ENCODE measurements at regions of chr17 and their contacts with region 1.

Region 1: DNA sequence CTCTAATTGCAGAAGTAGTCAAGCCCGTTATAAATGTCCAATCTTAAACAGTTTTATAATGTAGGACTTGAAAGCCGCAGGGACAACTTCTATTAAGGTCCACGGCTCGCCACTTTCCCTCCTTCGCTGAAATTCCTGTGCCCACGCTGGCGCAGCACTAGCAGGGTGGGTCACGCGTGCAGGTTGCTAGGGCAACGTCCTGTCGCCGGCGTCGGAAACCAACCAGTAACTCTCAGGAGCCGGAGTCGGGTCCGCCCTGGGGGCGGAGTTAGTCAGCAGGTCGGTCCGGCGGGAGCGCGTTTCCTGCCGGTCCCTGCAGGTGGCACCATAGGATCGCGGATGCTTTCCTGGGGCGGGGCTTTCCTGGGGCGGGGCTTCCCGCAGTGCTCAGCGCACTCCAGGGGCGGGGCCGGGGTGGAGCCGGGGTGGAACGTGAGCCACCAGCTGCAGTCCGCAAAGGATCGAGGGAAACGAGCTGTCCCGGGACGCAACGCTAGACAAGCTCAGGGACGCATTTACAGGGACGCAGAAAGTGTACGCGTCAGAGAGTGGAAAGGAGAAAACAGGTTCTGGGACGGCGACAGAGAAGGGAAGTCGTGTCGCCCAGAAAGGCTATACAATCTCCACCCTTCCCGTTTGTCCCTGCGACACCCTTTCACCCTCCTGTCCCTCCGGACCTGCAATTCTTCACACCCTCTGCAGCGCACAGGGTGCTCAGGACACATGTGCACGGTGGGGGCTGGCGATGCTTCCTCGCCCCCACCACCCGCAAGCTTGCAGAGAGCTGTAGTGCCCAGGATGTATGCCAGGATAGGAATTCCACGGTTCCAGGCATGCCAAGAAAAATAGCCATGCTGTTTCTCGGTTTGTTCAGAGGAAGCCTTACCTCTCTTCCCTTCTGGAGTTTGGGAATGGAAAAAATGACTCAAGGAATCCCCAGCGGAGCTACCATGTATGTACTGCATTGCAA is 12.4 kb downstream of the COPZ2 start:
- DNase-seq: peak; percentile 99
- ATAC-seq: peak; percentile 89
- H3K4me3 Mint-ChIP-seq: peak overlapping the region; percentile 77
- H3K27ac Mint-ChIP-seq: no peak overlapping the region
- H3K4me1 Mint-ChIP-seq: peaks cover 26% of the 10 kb centered on the region
- H3K27me3 Mint-ChIP-seq: peaks cover 25% of the 10 kb centered on the region

Region 2: GRCh38 chr17:47603830-47604597 is 421.2 kb before region 1 on chr17:
- CTCF ChIA-PET with region 1: no interaction called
- POLR2A ChIA-PET with region 1: no interaction called
- intact Hi-C with region 1: no loop called
- DNase-seq: no peak
- ATAC-seq: no peak
- H3K4me3 Mint-ChIP-seq: no peak overlapping the region
- H3K27ac Mint-ChIP-seq: no peak overlapping the region
- H3K4me1 Mint-ChIP-seq: peaks cover 4% of the 10 kb centered on the region
- H3K27me3 Mint-ChIP-seq: no peaks in the 10 kb centered on the region

Region 3: GRCh38 chr17:47895856-47896671 is 129.2 kb before region 1 on chr17 and contains the start of gene SP2:
- CTCF ChIA-PET with region 1: interaction called, 4 read pairs
- POLR2A ChIA-PET with region 1: no interaction called
- intact Hi-C with region 1: loop called (anchors 1 to 5 kb)
- DNase-seq: peak; percentile 99
- ATAC-seq: peak; percentile 94
- H3K4me3 Mint-ChIP-seq: peak within 1 kb of the TSS; percentile 96
- H3K27ac Mint-ChIP-seq: peak within 1 kb of the TSS; percentile 96
- H3K4me1 Mint-ChIP-seq: peaks cover 46% of the 10 kb centered on the region
- H3K27me3 Mint-ChIP-seq: no peaks in the 10 kb centered on the region
- total RNA-seq, gene SP2: 15.7 to 19.8 TPM

Region 4: GRCh38 chr17:48037036-48037837 is 12.0 kb after region 1 on chr17 and contains the start of gene COPZ2:
- CTCF ChIA-PET with region 1: interaction called, 47 read pairs
- POLR2A ChIA-PET with region 1: interaction called, 4 read pairs
- intact Hi-C with region 1: no loop called
- DNase-seq: peak; percentile 80
- ATAC-seq: peak; percentile 97
- H3K4me3 Mint-ChIP-seq: peak within 1 kb of the TSS; percentile 72
- H3K27ac Mint-ChIP-seq: peak within 1 kb of the TSS; percentile 72
- H3K4me1 Mint-ChIP-seq: peaks cover 9% of the 10 kb centered on the region
- H3K27me3 Mint-ChIP-seq: peaks cover 33% of the 10 kb centered on the region
- total RNA-seq, gene COPZ2: 3.6 to 4.1 TPM

Region 5: GRCh38 chr17:48074315-48075081 is 49.3 kb after region 1 on chr17:
- CTCF ChIA-PET with region 1: interaction called, 123 read pairs
- POLR2A ChIA-PET with region 1: no interaction called
- intact Hi-C with region 1: loop called (anchors 1 kb)
- DNase-seq: peak; percentile 86
- ATAC-seq: peak; percentile 75
- H3K4me3 Mint-ChIP-seq: no peak overlapping the region
- H3K27ac Mint-ChIP-seq: no peak overlapping the region
- H3K4me1 Mint-ChIP-seq: no peaks in the 10 kb centered on the region
- H3K27me3 Mint-ChIP-seq: no peaks in the 10 kb centered on the region

Region 6: GRCh38 chr17:48335858-48336500 is 310.8 kb after region 1 on chr17:
- CTCF ChIA-PET with region 1: no interaction called
- POLR2A ChIA-PET with region 1: no interaction called
- intact Hi-C with region 1: loop called (anchors 1 to 10 kb)
- DNase-seq: no peak
- ATAC-seq: peak; percentile 51
- H3K4me3 Mint-ChIP-seq: no peak overlapping the region
- H3K27ac Mint-ChIP-seq: no peak overlapping the region
- H3K4me1 Mint-ChIP-seq: peaks cover 11% of the 10 kb centered on the region
- H3K27me3 Mint-ChIP-seq: no peaks in the 10 kb centered on the region

Region 7: GRCh38 chr17:48892940-48893645 is 867.9 kb after region 1 on chr17:
- CTCF ChIA-PET with region 1: no interaction called
- POLR2A ChIA-PET with region 1: no interaction called
- intact Hi-C with region 1: loop called in 1 of 2 experiments (anchors 1 kb)
- DNase-seq: peak; percentile 30
- ATAC-seq: no peak
- H3K4me3 Mint-ChIP-seq: peak overlapping the region; percentile 86
- H3K27ac Mint-ChIP-seq: peak overlapping the region; percentile 97
- H3K4me1 Mint-ChIP-seq: peaks cover 29% of the 10 kb centered on the region
- H3K27me3 Mint-ChIP-seq: no peaks in the 10 kb centered on the region